PC-3 (cell line): ENCODE measurements at regions of chr7 and their contacts with region 1.

Region 1: DNA sequence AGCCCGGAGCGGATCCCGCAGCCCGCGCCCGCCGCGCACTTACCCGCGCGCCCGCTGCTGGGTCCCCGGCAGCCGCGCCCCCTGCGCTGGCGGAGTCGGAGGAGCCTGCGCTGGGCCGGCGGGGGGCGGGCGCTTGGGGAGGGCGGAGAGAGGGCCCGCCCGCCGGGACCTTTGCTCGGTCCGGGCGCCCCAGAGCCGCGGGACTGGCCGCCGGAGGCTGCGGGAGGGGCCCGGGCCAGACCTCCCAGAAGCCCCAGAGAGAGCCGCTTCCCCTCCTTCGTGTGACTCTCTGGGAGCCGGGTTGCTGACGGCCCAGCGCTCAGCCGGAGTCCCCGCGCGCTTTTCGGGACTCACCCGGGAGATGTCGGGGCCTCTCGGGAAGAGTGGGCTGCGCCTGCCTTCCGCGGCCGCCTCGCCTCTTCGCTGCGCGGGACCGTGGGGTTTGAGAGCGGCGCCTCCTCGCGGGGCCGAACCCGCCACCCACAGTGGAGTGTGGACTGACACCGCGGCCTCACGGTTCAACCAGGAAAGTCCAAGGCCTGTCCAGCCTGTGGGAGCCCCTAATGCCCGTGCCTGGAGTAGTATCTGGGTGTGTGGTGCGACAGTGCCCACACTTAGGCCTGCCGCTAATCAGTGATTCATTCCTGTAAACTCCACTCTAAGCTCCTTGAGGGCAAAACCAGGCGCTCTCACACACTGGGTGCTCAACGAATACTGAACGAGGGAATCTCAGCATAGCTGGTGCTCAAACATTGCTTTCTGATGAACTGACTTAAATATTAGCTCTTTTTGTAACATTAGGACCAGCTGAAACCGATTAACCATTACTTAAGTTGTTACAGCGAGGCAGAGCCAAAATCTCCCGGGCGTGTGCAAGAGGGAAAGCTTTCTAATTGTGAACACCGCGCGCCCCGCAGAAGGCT is at the start of gene GSDME:
- DNase-seq: peak; percentile 52
- ATAC-seq: peak; percentile 82
- H3K4me3 ChIP-seq: peak within 1 kb of the TSS; percentile 79
- H3K27ac ChIP-seq: peak within 1 kb of the TSS; percentile 33
- H3K4me1 ChIP-seq: peaks cover 22% of the 10 kb centered on the region
- H3K27me3 ChIP-seq: no peaks in the 10 kb centered on the region
- CTCF ChIP-seq: 0 out of 2 replicates have a peak, but pooled peaks have one; percentile 11
- total RNA-seq, gene GSDME: 12.0 and 16.6 TPM in 2 replicates

Region 2: DNA sequence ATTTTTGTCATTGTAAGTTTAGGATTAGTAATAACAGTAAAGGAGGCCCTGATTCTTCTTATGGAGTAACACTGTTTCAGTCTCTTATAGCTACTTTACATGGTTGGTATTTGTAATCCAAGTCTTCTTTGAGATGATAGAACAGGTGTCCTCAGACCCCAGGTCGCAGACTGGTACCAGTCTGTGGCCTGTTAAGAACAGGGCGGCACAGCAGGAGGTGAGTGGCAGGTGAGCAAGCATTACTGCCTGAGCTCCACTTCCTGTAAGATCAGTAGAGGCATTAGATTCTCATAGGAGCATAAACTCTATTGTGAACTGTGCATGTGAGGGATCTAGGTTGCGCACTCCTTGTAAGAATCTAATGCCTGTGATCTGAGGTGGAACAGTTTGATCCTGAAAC is 970.3 kb before region 1 on chr7:
- CTCF ChIA-PET with region 1: no interaction called
- POLR2A ChIA-PET with region 1: no interaction called
- intact Hi-C with region 1: no loop called
- DNase-seq: no peak
- ATAC-seq: no peak
- H3K4me3 ChIP-seq: no peak overlapping the region
- H3K27ac ChIP-seq: no peak overlapping the region
- H3K4me1 ChIP-seq: no peaks in the 10 kb centered on the region
- H3K27me3 ChIP-seq: no peaks in the 10 kb centered on the region
- CTCF ChIP-seq: no peak

Region 3: GRCh38 chr7:24786941-24787340 is 29.3 kb after region 1 on chr7:
- CTCF ChIA-PET with region 1: no interaction called
- POLR2A ChIA-PET with region 1: no interaction called
- intact Hi-C with region 1: loop called (anchors 1 kb)
- DNase-seq: peak; percentile 96
- ATAC-seq: peak; percentile 99
- H3K4me3 ChIP-seq: no peak overlapping the region
- H3K27ac ChIP-seq: peak overlapping the region; percentile 82
- H3K4me1 ChIP-seq: peaks cover 13% of the 10 kb centered on the region
- H3K27me3 ChIP-seq: no peaks in the 10 kb centered on the region
- CTCF ChIP-seq: no peak

Region 4: DNA sequence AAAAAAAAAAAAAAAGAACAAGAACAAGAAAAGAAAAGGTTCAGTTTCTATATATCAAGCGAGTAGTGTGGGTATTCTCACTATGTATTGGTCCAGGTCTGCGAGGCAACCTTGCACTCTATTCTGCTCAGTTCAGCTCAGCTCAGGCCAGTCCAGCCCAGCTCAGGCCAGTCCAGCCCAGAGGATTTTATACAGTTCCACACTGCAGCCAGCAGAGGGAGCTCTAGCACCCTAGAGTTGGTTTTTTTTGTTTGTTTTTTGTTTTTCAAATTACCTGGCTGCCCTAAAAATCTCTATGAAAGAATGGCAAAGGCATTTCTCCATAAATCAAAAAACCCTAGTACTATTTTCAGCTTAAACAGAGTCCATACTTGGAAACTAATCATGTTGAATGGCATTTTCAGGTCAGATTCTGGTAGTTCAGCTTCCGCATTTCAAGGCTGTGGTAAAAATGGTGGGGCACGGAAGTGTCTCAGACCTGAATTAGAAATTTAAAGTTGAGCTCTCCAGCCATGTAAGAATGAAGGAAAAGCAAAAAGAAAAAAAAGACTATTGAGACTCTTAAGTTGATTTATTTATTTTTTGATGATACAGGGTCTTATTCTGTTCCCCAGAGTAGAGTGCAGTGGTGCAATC is 54.8 kb after region 1 on chr7:
- CTCF ChIA-PET with region 1: no interaction called
- POLR2A ChIA-PET with region 1: no interaction called
- intact Hi-C with region 1: loop called (anchors 1 kb)
- DNase-seq: peak; percentile 67
- ATAC-seq: peak; percentile 93
- H3K4me3 ChIP-seq: no peak overlapping the region
- H3K27ac ChIP-seq: no peak overlapping the region
- H3K4me1 ChIP-seq: no peaks in the 10 kb centered on the region
- H3K27me3 ChIP-seq: no peaks in the 10 kb centered on the region
- CTCF ChIP-seq: peak; percentile 90